HEK293 (cell line): ENCODE measurements at regions of chr14 and their contacts with region 1.

Region 1: DNA sequence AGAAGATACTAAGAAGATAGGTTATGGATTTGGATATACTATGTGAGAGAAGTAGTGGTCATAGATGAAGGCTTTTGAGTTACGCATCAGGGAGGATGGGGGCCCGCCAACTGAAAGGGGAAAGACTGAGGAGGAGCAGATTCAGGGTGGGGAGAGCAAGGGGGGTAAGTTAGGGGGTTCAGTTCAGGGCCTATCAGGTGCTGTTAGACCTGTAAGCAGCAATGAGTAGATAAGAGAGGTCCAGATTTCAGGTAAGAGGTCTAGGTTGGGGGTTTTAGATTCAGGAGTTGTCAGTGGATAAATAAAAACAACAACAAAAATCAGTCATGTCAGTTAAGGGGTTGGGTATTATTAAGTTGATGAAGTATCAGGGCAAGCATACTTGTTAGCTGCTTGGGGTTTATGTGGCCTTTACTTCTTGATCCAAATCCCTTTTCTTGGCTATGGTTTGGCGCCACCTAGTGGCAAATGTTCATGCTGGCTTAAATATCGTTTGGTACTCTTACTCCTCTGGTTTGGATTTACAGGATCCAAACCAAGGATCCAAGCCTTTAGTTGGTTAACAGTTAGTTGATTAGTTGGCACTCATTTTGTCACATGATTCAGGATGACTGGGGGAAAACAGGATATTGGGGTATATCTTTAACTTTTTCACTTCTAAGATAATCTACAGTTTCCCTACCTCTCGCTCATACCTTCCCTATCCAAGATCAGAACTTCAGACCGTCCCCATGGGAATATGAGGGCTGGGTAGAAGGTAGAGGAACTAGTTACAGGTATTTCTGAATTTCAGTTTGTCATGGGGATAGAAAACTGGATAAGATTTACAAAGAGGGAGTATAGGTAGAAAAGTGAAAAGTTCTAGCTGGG is 65.1 kb downstream of the PCNX1 start:
- H3K4me3 ChIP-seq: no peak overlapping the region
- H3K27ac ChIP-seq: 0 out of 2 replicates have a peak overlapping the region, but pooled peaks have one; percentile 28
- H3K4me1 ChIP-seq: peaks cover 3% of the 10 kb centered on the region; the same call in 1 of the 2 replicates
- CTCF ChIP-seq: peak; percentile 27; the same call in 1 of the 2 replicates

Region 2: GRCh38 chr14:70816525-70816924 is 155.8 kb before region 1 on chr14:
- CTCF ChIA-PET with region 1: interaction called, 16 read pairs
- POLR2A ChIA-PET with region 1: no interaction called
- H3K4me3 ChIP-seq: no peak overlapping the region
- H3K27ac ChIP-seq: no peak overlapping the region
- H3K4me1 ChIP-seq: 0 out of 2 replicates have a peak, but pooled peaks cover 4% of the 10 kb centered on the region
- CTCF ChIP-seq: no peak

Region 3: GRCh38 chr14:70905331-70905746 is 67.0 kb before region 1 on chr14:
- CTCF ChIA-PET with region 1: interaction called, 10 read pairs
- POLR2A ChIA-PET with region 1: no interaction called
- H3K4me3 ChIP-seq: no peak overlapping the region
- H3K27ac ChIP-seq: no peak overlapping the region
- H3K4me1 ChIP-seq: peaks cover 7% of the 10 kb centered on the region
- CTCF ChIP-seq: no peak